Activated CD4-positive, alpha-beta T cell treated with anti-CD3 and anti-CD28 coated beads, Interleukin-2, amount 10 ng/mL, durations not matched to agents 24 days and 14 days (primary cell): ENCODE measurements at regions of chr3 and their contacts with region 1.

Region 1: GRCh38 chr3:107064445-107065060 is 312.7 kb upstream of the CCDC54 start:
- DNase-seq: peak; percentile 89
- H3K4me3 Mint-ChIP-seq: no peak overlapping the region
- H3K27ac Mint-ChIP-seq: no peak overlapping the region
- H3K4me1 Mint-ChIP-seq: peaks cover 17% of the 10 kb centered on the region
- H3K27me3 Mint-ChIP-seq: peaks cover 8% of the 10 kb centered on the region

Region 2: DNA sequence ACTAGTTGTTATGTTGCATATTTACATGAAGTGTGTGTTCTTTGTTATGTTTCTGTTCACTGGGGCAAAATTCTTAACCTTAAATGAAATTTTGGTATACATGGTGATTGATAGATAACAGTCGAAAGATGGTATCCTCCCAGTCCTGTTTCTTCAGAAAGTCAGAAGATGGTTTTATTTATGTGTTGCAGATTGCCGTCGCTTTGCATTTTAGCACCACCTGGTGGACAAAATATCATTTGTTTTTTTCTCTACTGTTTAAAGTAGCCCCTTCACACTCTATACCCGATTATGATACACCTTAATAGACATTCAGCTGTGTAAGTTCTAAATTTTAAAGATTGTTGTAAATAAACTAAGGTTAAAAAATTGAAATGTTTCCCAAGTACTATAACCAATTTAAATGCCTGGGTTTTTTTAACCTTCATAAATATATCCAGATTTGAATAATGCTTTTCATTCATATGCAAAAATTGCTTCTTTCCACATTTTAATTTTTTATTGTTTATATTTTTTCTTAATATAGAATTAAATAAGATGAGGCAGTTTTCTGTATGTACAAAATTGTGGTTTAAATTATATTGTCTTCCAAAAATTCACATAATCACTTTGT is 1545.6 kb before region 1 on chr3:
- intact Hi-C with region 1: loop called (anchors 5 kb)
- DNase-seq: peak; percentile 75
- H3K4me3 Mint-ChIP-seq: no peak overlapping the region
- H3K27ac Mint-ChIP-seq: no peak overlapping the region
- H3K4me1 Mint-ChIP-seq: peaks cover 3% of the 10 kb centered on the region
- H3K27me3 Mint-ChIP-seq: no peaks in the 10 kb centered on the region

Region 3: DNA sequence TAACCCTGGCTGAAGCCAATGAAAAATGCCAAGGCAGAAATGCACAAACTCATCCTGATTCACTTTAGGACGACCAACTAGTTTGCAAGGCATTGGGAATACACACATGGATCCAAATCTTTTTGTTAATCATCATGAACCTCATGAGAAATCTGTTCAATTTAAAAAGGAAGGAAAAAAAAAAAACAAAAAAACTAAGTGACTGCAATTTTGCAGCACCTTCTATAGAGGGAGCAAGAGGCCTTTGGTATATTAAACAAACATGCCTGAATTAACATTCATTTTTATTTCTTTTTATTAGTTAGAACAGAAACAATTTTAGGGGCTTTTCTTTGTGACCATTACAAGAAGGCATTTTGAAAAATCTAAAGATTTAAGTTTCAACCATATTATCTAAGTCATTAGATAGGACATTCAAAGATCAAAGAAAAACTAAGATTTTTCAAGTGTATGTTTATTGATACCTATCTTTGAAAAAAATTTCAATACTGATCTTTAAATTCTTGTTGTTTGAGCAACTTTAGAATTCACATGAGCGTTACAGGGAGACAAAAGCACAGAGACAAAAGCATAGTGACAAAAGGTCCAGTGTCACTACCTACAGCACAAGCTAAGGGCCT is 1378.2 kb before region 1 on chr3:
- intact Hi-C with region 1: loop called (anchors 10 kb)
- DNase-seq: peak; percentile 53
- H3K4me3 Mint-ChIP-seq: no peak overlapping the region
- H3K27ac Mint-ChIP-seq: peak overlapping the region; percentile 67
- H3K4me1 Mint-ChIP-seq: peaks cover 18% of the 10 kb centered on the region
- H3K27me3 Mint-ChIP-seq: no peaks in the 10 kb centered on the region

Region 4: DNA sequence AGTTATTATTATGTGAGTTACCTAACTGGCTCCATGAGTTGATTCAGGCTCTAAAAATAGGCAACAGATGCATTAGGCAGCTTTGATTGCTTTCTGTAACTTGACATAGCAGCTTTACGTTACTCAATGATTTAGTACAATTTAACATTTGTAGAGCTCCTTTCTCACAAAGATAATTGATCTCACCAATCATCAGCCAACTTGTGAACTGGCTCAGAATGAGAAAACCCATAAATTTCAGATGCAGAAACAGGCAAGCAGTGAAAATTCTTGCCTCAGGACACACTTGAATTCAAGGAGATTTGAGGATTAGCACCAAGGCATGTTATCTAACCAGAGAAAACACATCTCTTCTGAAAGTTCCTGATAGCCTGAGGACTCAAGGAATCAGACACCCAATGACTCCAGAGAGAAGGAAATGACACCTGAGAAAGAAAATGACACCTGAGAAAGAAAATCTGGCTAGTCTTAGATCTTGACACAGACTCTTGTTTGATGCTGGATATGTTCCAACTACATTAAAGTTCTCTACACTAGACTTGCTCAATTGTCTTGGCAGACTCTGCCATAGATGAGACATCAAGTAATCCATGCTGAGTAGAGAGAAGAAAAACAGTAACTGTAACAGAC is 880.7 kb before region 1 on chr3:
- intact Hi-C with region 1: loop called (anchors 5 kb)
- DNase-seq: no peak
- H3K4me3 Mint-ChIP-seq: peak overlapping the region; percentile 9
- H3K27ac Mint-ChIP-seq: peak overlapping the region; percentile 21
- H3K4me1 Mint-ChIP-seq: peaks cover 42% of the 10 kb centered on the region
- H3K27me3 Mint-ChIP-seq: no peaks in the 10 kb centered on the region

Region 5: DNA sequence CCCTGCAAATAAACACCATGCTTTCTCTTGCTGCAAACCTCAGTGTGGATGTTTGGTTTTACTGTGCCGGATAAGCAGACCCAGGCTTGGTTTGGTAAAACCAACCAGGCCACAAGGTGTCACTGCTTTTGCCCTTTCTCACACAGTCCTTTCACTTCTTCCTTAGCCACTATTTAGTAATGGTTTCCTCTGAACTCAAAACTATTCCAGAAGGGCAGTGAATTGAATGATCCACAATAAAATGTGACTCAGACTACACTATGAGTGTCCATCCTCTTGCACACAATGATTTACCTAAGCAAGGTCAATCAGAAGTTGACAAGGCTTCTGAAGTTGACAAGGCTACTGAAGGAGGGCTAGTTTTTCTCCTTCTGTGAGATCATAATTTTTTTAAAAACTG is 239.7 kb before region 1 on chr3:
- intact Hi-C with region 1: loop called (anchors 10 kb)
- DNase-seq: peak; percentile 60
- H3K4me3 Mint-ChIP-seq: no peak overlapping the region
- H3K27ac Mint-ChIP-seq: no peak overlapping the region
- H3K4me1 Mint-ChIP-seq: peaks cover 6% of the 10 kb centered on the region
- H3K27me3 Mint-ChIP-seq: no peaks in the 10 kb centered on the region

Region 6: DNA sequence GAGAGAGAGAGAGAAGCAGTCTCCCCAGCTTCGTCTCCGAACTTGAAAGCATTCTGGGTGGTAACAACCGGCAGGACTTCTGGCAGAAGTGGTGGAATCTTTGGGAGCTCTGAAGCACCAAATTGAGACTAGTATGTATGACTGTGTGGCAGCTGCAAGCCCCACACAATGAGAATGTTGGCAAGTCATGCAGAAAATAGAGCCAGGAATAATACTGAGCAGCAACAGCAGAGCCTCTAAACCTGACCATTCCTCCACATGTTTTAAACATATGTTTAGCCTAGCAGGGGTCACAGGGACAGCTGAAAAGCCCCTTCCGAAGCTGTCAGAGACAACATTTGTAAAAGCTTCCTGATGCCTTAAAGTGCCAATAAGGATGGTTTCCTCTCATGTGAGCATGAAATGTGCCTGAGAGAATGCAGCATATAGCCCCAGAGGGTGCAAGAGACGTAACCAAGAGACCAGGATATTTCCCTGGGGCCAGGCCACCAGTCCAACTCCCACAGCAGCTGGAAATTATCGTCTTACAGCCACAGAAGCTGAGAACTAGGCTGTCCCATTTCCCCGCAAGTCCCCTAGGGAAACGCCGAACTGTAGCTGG is 134.1 kb after region 1 on chr3:
- intact Hi-C with region 1: no loop called
- DNase-seq: no peak
- H3K4me3 Mint-ChIP-seq: no peak overlapping the region
- H3K27ac Mint-ChIP-seq: no peak overlapping the region
- H3K4me1 Mint-ChIP-seq: no peaks in the 10 kb centered on the region
- H3K27me3 Mint-ChIP-seq: peaks cover 15% of the 10 kb centered on the region

Region 7: GRCh38 chr3:107690522-107691138 is 626.1 kb after region 1 on chr3:
- intact Hi-C with region 1: no loop called
- DNase-seq: peak; percentile 62
- H3K4me3 Mint-ChIP-seq: no peak overlapping the region
- H3K27ac Mint-ChIP-seq: no peak overlapping the region
- H3K4me1 Mint-ChIP-seq: no peaks in the 10 kb centered on the region
- H3K27me3 Mint-ChIP-seq: no peaks in the 10 kb centered on the region